Activated CD4-positive, alpha-beta memory T cell treated with anti-CD3 and anti-CD28 coated beads, Interleukin-2, amount 10 ng/mL, durations not matched to agents 7 days and 5 days (primary cell): ENCODE measurements at regions of chr11 and their contacts with region 1.

Region 1: GRCh38 chr11:73295231-73295995 is 12.7 kb upstream of the ARHGEF17 start:
- DNase-seq: peak; percentile 81
- H3K4me3 Mint-ChIP-seq: no peak overlapping the region
- H3K27ac Mint-ChIP-seq: no peak overlapping the region
- H3K4me1 Mint-ChIP-seq: no peaks in the 10 kb centered on the region
- H3K27me3 Mint-ChIP-seq: peaks cover 1% of the 10 kb centered on the region

Region 2: GRCh38 chr11:73227588-73228211 is 67.7 kb before region 1 on chr11:
- CTCF ChIA-PET with region 1: no interaction called
- POLR2A ChIA-PET with region 1: no interaction called
- DNase-seq: no peak
- H3K4me3 Mint-ChIP-seq: no peak overlapping the region
- H3K27ac Mint-ChIP-seq: no peak overlapping the region
- H3K4me1 Mint-ChIP-seq: peaks cover 6% of the 10 kb centered on the region
- H3K27me3 Mint-ChIP-seq: peaks cover 9% of the 10 kb centered on the region

Region 3: GRCh38 chr11:73307323-73308002 is 12.1 kb after region 1 on chr11:
- CTCF ChIA-PET with region 1: interaction called, 13 read pairs
- POLR2A ChIA-PET with region 1: interaction called, 3 read pairs
- DNase-seq: peak; percentile 89
- H3K4me3 Mint-ChIP-seq: peak overlapping the region; percentile 83
- H3K27ac Mint-ChIP-seq: no peak overlapping the region
- H3K4me1 Mint-ChIP-seq: peaks cover 8% of the 10 kb centered on the region
- H3K27me3 Mint-ChIP-seq: peaks cover 44% of the 10 kb centered on the region

Region 4: GRCh38 chr11:73335204-73335923 is 40.0 kb after region 1 on chr11:
- CTCF ChIA-PET with region 1: interaction called, 18 read pairs
- POLR2A ChIA-PET with region 1: no interaction called
- DNase-seq: peak; percentile 75
- H3K4me3 Mint-ChIP-seq: no peak overlapping the region
- H3K27ac Mint-ChIP-seq: no peak overlapping the region
- H3K4me1 Mint-ChIP-seq: no peaks in the 10 kb centered on the region
- H3K27me3 Mint-ChIP-seq: peaks cover 7% of the 10 kb centered on the region